T-cell (primary cell): ENCODE measurements at regions of chr6 and their contacts with region 1.

Region 1: GRCh38 chr6:161418463-161418945 is 144.6 kb upstream of the AGPAT4 start:
- DNase-seq: peak in 10 of 35 experiments; percentile 3 to 66 (median 8)
- ATAC-seq: no peak
- H3K4me3 ChIP-seq: no peak overlapping the region
- H3K4me3 Mint-ChIP-seq: no peak overlapping the region
- H3K27ac ChIP-seq: no peak overlapping the region
- H3K27ac Mint-ChIP-seq: no peak overlapping the region
- H3K4me1 ChIP-seq: no peaks in the 10 kb centered on the region
- H3K4me1 Mint-ChIP-seq: no peaks in the 10 kb centered on the region
- H3K27me3 ChIP-seq: peaks cover 0 to 28% of the 10 kb centered on the region in 2 experiments
- H3K27me3 Mint-ChIP-seq: peaks cover 5 to 19% of the 10 kb centered on the region in 2 donors

Region 2: DNA sequence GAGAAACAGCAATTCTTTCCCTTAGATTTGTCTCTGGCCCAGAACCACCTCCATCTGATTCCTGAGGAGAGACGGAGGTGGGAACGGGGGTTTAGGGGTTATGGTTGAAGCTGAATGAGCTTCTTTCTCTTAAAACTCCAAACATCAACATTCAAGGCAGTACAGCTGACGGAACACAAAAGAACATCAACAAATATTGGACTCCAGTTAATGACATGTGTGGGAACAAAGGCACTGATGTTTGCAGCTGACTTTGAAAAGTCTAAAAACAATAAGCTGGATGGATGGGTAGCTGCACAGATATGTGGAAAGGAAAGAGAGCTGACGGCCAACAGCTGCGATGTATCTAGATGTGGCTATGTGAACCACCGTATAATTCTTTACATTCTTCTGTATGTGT is 1981.9 kb before region 1 on chr6:
- CTCF ChIA-PET with region 1: interaction called in 1 of 2 experiments, 13 read pairs
- POLR2A ChIA-PET with region 1: no interaction called
- DNase-seq: no peak
- ATAC-seq: no peak
- H3K4me3 ChIP-seq: no peak overlapping the region
- H3K4me3 Mint-ChIP-seq: no peak overlapping the region
- H3K27ac ChIP-seq: no peak overlapping the region
- H3K27ac Mint-ChIP-seq: no peak overlapping the region
- H3K4me1 ChIP-seq: no peaks in the 10 kb centered on the region
- H3K4me1 Mint-ChIP-seq: no peaks in the 10 kb centered on the region
- H3K27me3 ChIP-seq: peaks cover 0 to 24% of the 10 kb centered on the region in 2 experiments
- H3K27me3 Mint-ChIP-seq: peaks cover 9 to 38% of the 10 kb centered on the region in 2 donors

Region 3: GRCh38 chr6:161393839-161394364 is 24.6 kb before region 1 on chr6:
- CTCF ChIA-PET with region 1: interaction called in 1 of 2 experiments, 10 read pairs
- POLR2A ChIA-PET with region 1: interaction called in 1 of 2 experiments, 3 read pairs
- DNase-seq: peak in 32 of 35 experiments; percentile 6 to 81 (median 38)
- ATAC-seq: peak; percentile 89 to 98 (median 98)
- H3K4me3 ChIP-seq: no peak overlapping the region
- H3K4me3 Mint-ChIP-seq: no peak overlapping the region
- H3K27ac ChIP-seq: peak overlapping the region; percentile 18
- H3K27ac Mint-ChIP-seq: no peak overlapping the region
- H3K4me1 ChIP-seq: peaks cover 0 to 4% of the 10 kb centered on the region in 2 experiments
- H3K4me1 Mint-ChIP-seq: no peaks in the 10 kb centered on the region
- H3K27me3 ChIP-seq: peaks cover 0 to 6% of the 10 kb centered on the region in 2 experiments
- H3K27me3 Mint-ChIP-seq: peaks cover 0 to 5% of the 10 kb centered on the region in 2 donors

Region 4: DNA sequence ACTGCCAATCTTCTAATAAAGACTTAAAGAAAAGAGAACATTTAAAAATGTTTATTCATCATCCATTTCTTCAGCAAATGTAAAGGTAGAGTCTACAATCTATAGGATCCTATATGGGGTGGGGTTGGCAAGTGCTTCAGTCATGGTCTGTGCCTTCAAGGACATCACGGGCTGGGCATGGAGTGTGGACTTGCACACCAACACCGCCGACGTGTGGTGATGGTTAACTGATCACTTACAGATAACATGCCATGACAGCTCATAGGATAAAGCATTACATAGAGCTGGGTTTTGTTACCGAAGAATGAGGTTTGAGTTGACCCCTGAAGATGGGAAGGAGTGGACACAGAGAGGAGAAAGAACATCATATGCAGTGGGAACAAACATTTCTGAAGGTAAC is 713.3 kb after region 1 on chr6:
- CTCF ChIA-PET with region 1: interaction called in 1 of 2 experiments, 11 read pairs
- POLR2A ChIA-PET with region 1: no interaction called
- DNase-seq: no peak
- ATAC-seq: no peak
- H3K4me3 ChIP-seq: no peak overlapping the region
- H3K4me3 Mint-ChIP-seq: no peak overlapping the region
- H3K27ac ChIP-seq: no peak overlapping the region
- H3K27ac Mint-ChIP-seq: no peak overlapping the region
- H3K4me1 ChIP-seq: no peaks in the 10 kb centered on the region
- H3K4me1 Mint-ChIP-seq: no peaks in the 10 kb centered on the region
- H3K27me3 ChIP-seq: no peaks in the 10 kb centered on the region
- H3K27me3 Mint-ChIP-seq: no peaks in the 10 kb centered on the region